Naive thymus-derived CD4-positive, alpha-beta T cell (primary cell): ENCODE measurements at regions of chr6 and their contacts with region 1.

Region 1: GRCh38 chr6:16153211-16153820 is 24.4 kb downstream of the MYLIP start:
- DNase-seq: no peak
- ATAC-seq: no peak
- H3K4me3 ChIP-seq: no peak overlapping the region
- H3K4me3 Mint-ChIP-seq: no peak overlapping the region
- H3K27ac ChIP-seq: no peak overlapping the region
- H3K27ac Mint-ChIP-seq: peak overlapping the region in 1 of 9 donors; percentile 0
- H3K4me1 ChIP-seq: no peaks in the 10 kb centered on the region
- H3K4me1 Mint-ChIP-seq: peaks cover 2 to 25% (median 6%) of the 10 kb centered on the region in 7 donors
- H3K27me3 ChIP-seq: no peaks in the 10 kb centered on the region
- H3K27me3 Mint-ChIP-seq: no peaks in the 10 kb centered on the region

Region 2: DNA sequence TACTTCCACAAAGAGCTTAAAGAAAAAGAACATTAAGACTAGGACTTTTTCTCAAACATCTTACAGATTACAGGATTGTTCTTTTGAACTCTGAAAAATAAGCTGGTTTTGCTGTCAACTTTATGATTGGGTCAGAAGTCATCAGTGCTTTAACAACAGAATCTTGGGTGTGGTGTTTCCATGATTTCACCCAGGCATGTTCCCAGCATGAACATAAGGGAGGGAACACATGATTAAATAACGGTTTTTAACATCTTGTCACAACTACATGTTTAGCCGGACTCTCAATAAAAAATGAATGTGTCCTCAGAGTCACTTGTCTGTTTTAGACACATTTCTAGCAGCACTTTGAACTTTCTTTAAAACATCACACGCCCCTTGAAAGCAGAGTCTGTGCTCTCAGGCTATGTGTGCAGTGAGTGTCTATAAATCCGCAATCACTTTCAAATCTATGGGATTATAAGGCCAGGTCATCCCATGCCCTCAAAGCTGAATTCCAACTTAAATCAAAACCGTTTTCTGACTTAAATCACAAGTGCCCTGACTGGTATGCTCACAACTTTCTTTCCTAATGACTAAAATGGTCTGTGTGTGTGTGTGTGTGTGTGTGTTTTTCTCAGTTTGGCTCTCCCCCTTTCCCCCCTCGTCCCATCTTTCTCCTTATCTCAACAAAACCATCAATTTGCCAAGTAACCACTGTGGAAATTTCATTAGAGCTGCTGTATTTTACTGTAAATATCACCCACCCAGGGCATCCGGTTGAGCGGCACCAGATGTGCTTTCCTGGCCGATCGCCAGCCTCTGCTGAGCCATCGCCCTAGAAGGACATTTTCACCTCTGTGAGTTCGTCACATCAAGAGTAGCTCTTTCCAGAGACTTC is 273.7 kb before region 1 on chr6:
- CTCF ChIA-PET with region 1: no interaction called
- POLR2A ChIA-PET with region 1: no interaction called
- intact Hi-C with region 1: no loop called
- DNase-seq: peak in 8 of 9 donors; percentile 4 to 59 (median 46)
- ATAC-seq: peak; percentile 55
- H3K4me3 ChIP-seq: no peak overlapping the region
- H3K4me3 Mint-ChIP-seq: peak overlapping the region in 8 of 10 donors; percentile 5 to 68 (median 22)
- H3K27ac ChIP-seq: no peak overlapping the region
- H3K27ac Mint-ChIP-seq: peak overlapping the region in 5 of 9 donors; percentile 3 to 52 (median 19)
- H3K4me1 ChIP-seq: peaks cover 3 to 6% of the 10 kb centered on the region in 2 donors
- H3K4me1 Mint-ChIP-seq: peaks cover 17 to 28% (median 21%) of the 10 kb centered on the region in 7 donors
- H3K27me3 ChIP-seq: no peaks in the 10 kb centered on the region
- H3K27me3 Mint-ChIP-seq: peaks cover 0 to 3% (median 0%) of the 10 kb centered on the region in 5 donors

Region 3: DNA sequence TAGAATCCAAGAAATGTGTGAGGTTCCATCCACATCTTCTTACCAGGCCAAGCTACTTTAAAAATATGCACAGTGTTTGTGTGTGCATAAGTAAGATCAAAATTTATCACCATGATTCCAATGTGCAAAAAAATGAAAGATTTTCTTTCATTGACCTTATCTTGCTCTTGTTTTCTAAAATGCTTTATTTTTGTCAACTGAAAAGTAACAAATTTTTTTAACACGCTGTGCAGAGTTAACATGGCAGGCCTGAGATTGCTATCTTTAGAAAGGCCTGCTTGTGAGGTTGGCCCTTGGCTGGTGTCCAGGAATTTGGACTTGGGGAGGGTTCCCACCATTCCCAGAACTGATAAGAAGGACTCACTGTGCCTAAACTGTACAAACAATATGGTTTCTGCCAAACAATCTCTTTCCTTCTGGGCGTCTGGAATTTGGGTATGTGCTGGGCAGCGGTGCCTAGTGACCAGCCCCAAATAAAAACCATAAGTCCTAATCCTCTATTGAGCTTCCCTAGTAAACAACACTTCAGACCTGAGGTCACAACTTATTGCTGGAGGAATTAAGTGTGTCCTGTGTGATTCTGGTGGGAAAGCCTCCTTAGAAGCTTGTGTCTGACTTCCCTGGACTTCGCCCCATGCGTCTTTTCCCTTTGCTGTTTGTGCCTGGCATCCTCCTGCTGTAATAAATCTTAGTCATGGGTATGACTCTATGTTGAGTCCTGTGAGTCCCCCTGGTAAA is 44.2 kb before region 1 on chr6:
- CTCF ChIA-PET with region 1: no interaction called
- POLR2A ChIA-PET with region 1: no interaction called
- intact Hi-C with region 1: no loop called
- DNase-seq: no peak
- ATAC-seq: no peak
- H3K4me3 ChIP-seq: no peak overlapping the region
- H3K4me3 Mint-ChIP-seq: no peak overlapping the region
- H3K27ac ChIP-seq: no peak overlapping the region
- H3K27ac Mint-ChIP-seq: no peak overlapping the region
- H3K4me1 ChIP-seq: no peaks in the 10 kb centered on the region
- H3K4me1 Mint-ChIP-seq: peaks cover 0 to 3% (median 0%) of the 10 kb centered on the region in 7 donors
- H3K27me3 ChIP-seq: no peaks in the 10 kb centered on the region
- H3K27me3 Mint-ChIP-seq: peaks cover 0 to 10% (median 0%) of the 10 kb centered on the region in 5 donors

Region 4: GRCh38 chr6:16136621-16137450 is 16.5 kb before region 1 on chr6:
- CTCF ChIA-PET with region 1: no interaction called
- POLR2A ChIA-PET with region 1: interaction called, 7 read pairs
- intact Hi-C with region 1: loop called in 1 of 2 experiments (anchors 2 kb)
- DNase-seq: peak in 6 of 9 donors; percentile 24 to 50 (median 32)
- ATAC-seq: peak; percentile 48
- H3K4me3 ChIP-seq: peak overlapping the region; percentile 35
- H3K4me3 Mint-ChIP-seq: peak overlapping the region; percentile 46 to 100 (median 82)
- H3K27ac ChIP-seq: no peak overlapping the region
- H3K27ac Mint-ChIP-seq: peak overlapping the region; percentile 49 to 90 (median 71)
- H3K4me1 ChIP-seq: peaks cover 68 to 75% of the 10 kb centered on the region in 2 donors
- H3K4me1 Mint-ChIP-seq: peaks cover 71 to 100% (median 97%) of the 10 kb centered on the region in 7 donors
- H3K27me3 ChIP-seq: no peaks in the 10 kb centered on the region
- H3K27me3 Mint-ChIP-seq: no peaks in the 10 kb centered on the region

Region 5: GRCh38 chr6:16243055-16243454 is 89.7 kb after region 1 on chr6:
- CTCF ChIA-PET with region 1: no interaction called
- POLR2A ChIA-PET with region 1: no interaction called
- intact Hi-C with region 1: no loop called
- DNase-seq: no peak
- ATAC-seq: no peak
- H3K4me3 ChIP-seq: no peak overlapping the region
- H3K4me3 Mint-ChIP-seq: no peak overlapping the region
- H3K27ac ChIP-seq: no peak overlapping the region
- H3K27ac Mint-ChIP-seq: no peak overlapping the region
- H3K4me1 ChIP-seq: peaks cover 7 to 8% of the 10 kb centered on the region in 2 donors
- H3K4me1 Mint-ChIP-seq: peaks cover 4 to 14% (median 9%) of the 10 kb centered on the region in 7 donors
- H3K27me3 ChIP-seq: no peaks in the 10 kb centered on the region
- H3K27me3 Mint-ChIP-seq: peaks cover 6 to 28% (median 7%) of the 10 kb centered on the region in 5 donors